ENCODE measurements at regions of chr12 and their contacts with region 1.

Region 1: DNA sequence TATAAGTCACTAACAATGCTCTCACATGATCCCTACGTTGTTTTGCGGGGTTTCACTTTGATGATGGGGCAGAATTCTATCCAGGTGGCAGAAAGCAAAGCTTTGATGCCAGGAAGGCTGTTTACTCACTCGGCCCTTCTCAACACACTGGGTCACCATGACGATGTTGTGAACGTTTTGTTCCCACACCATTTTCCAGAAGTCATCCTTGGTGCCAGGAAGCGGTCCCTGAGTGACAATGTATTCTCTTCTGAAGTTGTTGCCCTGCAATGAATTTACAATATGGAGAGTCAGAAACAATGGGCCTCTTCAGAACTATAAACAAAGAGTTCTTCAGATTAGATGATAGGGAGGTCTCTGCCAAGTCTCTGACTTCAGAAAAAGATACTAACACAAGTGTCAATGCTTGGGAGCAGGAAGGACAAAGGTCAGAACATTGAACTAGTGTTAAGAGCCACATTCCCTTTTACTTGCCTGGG is 101.3 kb downstream of the PTPRB start:
- DNase-seq: peak; percentile 11 to 87 (median 72)
- H3K4me3 ChIP-seq: peak overlapping the region in 5 of 59 donors; percentile 5 to 32 (median 14)
- H3K27ac ChIP-seq: peak overlapping the region; percentile 52 to 99 (median 95)
- H3K27me3 ChIP-seq: no peaks in the 10 kb centered on the region
- CTCF ChIP-seq: peak in 1 of 56 donors; percentile 11

Region 2: GRCh38 chr12:70338526-70338925 is 197.4 kb before region 1 on chr12:
- intact Hi-C with region 1: no loop called
- DNase-seq: no peak
- H3K4me3 ChIP-seq: no peak overlapping the region
- H3K27ac ChIP-seq: no peak overlapping the region
- H3K27me3 ChIP-seq: no peaks in the 10 kb centered on the region
- CTCF ChIP-seq: no peak

Region 3: GRCh38 chr12:70557583-70558191 is 21.8 kb after region 1 on chr12:
- intact Hi-C with region 1: loop called (anchors 1 kb)
- DNase-seq: peak; percentile 17 to 97 (median 86)
- H3K4me3 ChIP-seq: peak overlapping the region in 16 of 59 donors; percentile 1 to 45 (median 12)
- H3K27ac ChIP-seq: peak overlapping the region; percentile 69 to 99 (median 91)
- H3K27me3 ChIP-seq: no peaks in the 10 kb centered on the region
- CTCF ChIP-seq: peak in 13 of 56 donors; percentile 1 to 25 (median 11)

Region 4: DNA sequence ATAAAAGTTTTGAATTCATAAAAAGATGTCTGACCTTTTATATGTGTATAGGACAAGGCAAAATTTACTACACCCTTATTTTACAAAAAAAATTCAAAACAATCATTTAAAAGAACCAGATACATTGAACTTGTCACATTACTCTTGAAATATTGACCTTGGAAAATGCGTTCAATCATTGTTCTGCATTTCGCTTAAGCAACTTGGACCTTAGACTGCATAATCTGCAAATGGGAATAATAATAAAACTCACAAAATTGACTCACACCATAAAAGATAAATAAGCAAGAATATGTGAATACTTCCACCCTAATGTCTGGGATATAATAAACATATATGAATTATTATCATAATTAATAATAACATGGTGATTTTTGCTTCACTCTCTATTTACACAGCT is 170.7 kb after region 1 on chr12:
- intact Hi-C with region 1: no loop called
- DNase-seq: no peak
- H3K4me3 ChIP-seq: no peak overlapping the region
- H3K27ac ChIP-seq: no peak overlapping the region
- H3K27me3 ChIP-seq: no peaks in the 10 kb centered on the region
- CTCF ChIP-seq: no peak

Measured in dorsolateral prefrontal cortex (tissue), 120 donors.